MCF 10A (cell line): ENCODE measurements at regions of chr1 and their contacts with region 1.

Region 1: DNA sequence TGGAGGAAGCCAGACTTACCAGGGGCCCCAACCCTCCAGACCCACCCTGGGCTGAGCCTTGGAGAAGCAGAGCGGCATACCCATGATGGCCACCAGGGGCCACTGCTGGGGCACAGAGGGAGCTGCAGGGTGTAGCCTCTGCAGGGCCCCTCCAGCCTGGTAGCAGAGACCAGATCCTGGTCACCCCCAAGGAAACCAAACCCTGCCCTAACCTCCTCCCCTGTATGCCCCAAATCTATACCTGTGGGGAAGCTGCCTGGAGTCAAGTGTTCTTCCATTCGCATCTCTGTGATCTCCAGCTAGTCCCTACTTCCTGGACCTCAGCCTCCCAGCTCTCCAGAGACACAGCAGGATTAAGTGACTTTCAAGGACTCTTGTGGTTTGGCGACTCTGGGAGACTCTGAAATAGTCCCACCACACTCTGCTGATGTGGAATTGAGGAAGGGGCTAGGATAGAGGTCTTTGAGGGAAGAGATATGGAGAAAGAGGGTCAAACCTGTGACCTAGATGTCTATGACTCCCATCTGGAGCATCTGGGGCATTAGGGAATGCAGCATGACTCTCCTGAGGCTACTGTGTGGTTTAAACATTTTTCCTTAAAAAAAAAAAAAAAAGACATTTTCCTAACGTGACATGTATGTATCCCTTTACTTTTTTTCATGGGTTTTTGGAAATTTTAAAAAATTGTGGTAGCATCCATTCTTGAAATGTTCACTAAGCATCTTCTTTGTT is 119.2 kb upstream of the IPO9 start:
- DNase-seq: peak; percentile 87
- H3K4me3 Mint-ChIP-seq: no peak overlapping the region
- H3K27ac Mint-ChIP-seq: no peak overlapping the region
- H3K4me1 Mint-ChIP-seq: peaks cover 52% of the 10 kb centered on the region
- H3K27me3 Mint-ChIP-seq: no peaks in the 10 kb centered on the region
- CTCF ChIP-seq: peak; percentile 100

Region 2: DNA sequence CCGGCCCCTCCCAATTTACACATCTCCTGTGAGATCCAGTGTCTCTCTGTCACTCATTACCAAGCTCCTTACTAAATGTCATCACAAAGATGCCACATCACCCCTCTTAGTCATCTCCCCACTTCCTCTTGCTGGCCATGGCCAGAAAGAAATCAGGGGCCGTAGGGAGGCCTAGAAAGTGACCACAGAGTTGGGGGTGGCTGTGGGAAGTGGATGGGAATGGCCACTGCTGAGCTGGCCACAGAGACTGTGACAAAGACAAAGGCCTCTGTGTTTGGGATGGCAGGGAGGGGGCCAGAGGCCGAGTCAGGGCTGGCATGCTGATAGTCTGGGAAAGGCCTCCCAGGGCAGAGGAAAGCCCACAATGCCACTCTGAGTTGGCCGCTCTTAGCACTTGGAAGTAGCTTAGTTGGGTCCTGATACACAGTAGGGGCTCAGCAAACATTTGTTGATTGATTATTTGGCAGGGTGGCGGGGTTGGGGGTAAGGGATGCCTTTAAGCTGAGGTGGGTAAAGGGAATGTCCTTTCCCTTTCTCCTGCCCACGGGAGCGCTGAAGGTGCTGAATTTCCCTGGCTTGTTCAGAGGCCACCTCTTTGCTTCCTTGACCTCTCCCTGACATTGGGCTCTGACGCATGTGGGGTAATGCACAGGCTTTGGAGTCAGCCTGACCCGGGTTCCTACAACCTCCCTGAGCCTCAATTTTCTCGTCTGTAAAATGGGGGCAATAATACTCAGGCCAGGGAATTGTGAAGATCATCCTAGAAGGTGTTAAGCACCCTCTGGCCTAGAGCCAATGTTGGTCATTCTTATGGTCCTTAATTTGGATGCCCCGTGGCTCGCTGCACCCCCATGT is 157.6 kb before region 1 on chr1:
- CTCF ChIA-PET with region 1: interaction called, 779 read pairs
- POLR2A ChIA-PET with region 1: interaction called, 4 read pairs
- intact Hi-C with region 1: no loop called
- DNase-seq: no peak
- H3K4me3 Mint-ChIP-seq: no peak overlapping the region
- H3K27ac Mint-ChIP-seq: no peak overlapping the region
- H3K4me1 Mint-ChIP-seq: no peaks in the 10 kb centered on the region
- H3K27me3 Mint-ChIP-seq: no peaks in the 10 kb centered on the region
- CTCF ChIP-seq: no peak

Region 3: DNA sequence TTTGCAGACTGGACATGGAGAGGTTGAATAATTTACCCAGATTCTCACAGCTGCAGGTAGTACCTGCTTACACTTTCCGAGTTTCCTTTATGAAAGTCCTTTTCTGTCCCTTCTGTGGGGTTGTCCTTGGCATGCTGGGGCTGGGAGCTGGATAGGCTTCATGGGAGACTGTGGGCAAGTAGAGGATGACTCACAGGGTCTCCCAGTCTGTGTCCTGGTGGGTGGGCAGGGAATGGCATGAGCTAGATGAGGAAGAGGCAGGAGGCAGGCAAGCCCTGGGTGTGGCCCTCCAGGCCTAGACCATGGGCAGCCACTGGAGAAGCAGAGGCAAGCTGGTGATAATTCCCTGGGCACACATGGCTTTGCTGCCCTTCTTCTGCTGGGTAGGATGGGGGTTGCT is 90.2 kb before region 1 on chr1:
- CTCF ChIA-PET with region 1: interaction called, 11 read pairs
- POLR2A ChIA-PET with region 1: no interaction called
- intact Hi-C with region 1: no loop called
- DNase-seq: no peak
- H3K4me3 Mint-ChIP-seq: no peak overlapping the region
- H3K27ac Mint-ChIP-seq: no peak overlapping the region
- H3K4me1 Mint-ChIP-seq: peaks cover 23% of the 10 kb centered on the region
- H3K27me3 Mint-ChIP-seq: no peaks in the 10 kb centered on the region
- CTCF ChIP-seq: no peak

Region 4: GRCh38 chr1:201719812-201720521 is 10.2 kb after region 1 on chr1:
- CTCF ChIA-PET with region 1: interaction called, 103 read pairs
- POLR2A ChIA-PET with region 1: interaction called, 34 read pairs
- intact Hi-C with region 1: no loop called
- DNase-seq: no peak
- H3K4me3 Mint-ChIP-seq: no peak overlapping the region
- H3K27ac Mint-ChIP-seq: peak overlapping the region; percentile 52
- H3K4me1 Mint-ChIP-seq: peaks cover 23% of the 10 kb centered on the region
- H3K27me3 Mint-ChIP-seq: no peaks in the 10 kb centered on the region
- CTCF ChIP-seq: no peak

Region 5: DNA sequence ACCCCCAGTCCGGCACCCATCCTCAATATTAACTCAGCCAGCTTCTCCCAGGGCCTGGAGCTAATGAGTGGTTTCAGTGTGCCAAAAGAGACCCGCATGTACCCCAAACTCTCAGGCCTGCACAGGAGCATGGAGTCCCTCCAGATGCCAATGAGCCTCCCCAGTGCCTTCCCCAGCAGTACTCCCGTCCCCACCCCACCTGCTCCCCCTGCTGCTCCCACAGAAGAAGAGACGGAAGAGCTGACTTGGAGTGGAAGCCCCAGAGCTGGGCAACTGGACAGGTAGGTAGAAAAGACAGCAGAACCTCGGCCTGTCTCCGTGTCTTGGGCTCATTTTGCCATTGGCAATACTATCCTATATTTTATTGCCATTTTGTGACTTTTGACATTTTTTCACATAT is 73.8 kb after region 1 on chr1:
- CTCF ChIA-PET with region 1: interaction called, 1,744 read pairs
- POLR2A ChIA-PET with region 1: interaction called, 168 read pairs
- intact Hi-C with region 1: no loop called
- DNase-seq: no peak
- H3K4me3 Mint-ChIP-seq: no peak overlapping the region
- H3K27ac Mint-ChIP-seq: peak overlapping the region; percentile 22
- H3K4me1 Mint-ChIP-seq: peaks cover 12% of the 10 kb centered on the region
- H3K27me3 Mint-ChIP-seq: no peaks in the 10 kb centered on the region
- CTCF ChIP-seq: no peak

Region 6: GRCh38 chr1:201818971-201819750 is 109.4 kb after region 1 on chr1:
- CTCF ChIA-PET with region 1: interaction called, 12 read pairs
- POLR2A ChIA-PET with region 1: no interaction called
- intact Hi-C with region 1: no loop called
- DNase-seq: no peak
- H3K4me3 Mint-ChIP-seq: no peak overlapping the region
- H3K27ac Mint-ChIP-seq: no peak overlapping the region
- H3K4me1 Mint-ChIP-seq: no peaks in the 10 kb centered on the region
- H3K27me3 Mint-ChIP-seq: no peaks in the 10 kb centered on the region
- CTCF ChIP-seq: no peak